CD8-positive, alpha-beta T cell (primary cell): ENCODE measurements at regions of chr19 and their contacts with region 1.

Region 1: DNA sequence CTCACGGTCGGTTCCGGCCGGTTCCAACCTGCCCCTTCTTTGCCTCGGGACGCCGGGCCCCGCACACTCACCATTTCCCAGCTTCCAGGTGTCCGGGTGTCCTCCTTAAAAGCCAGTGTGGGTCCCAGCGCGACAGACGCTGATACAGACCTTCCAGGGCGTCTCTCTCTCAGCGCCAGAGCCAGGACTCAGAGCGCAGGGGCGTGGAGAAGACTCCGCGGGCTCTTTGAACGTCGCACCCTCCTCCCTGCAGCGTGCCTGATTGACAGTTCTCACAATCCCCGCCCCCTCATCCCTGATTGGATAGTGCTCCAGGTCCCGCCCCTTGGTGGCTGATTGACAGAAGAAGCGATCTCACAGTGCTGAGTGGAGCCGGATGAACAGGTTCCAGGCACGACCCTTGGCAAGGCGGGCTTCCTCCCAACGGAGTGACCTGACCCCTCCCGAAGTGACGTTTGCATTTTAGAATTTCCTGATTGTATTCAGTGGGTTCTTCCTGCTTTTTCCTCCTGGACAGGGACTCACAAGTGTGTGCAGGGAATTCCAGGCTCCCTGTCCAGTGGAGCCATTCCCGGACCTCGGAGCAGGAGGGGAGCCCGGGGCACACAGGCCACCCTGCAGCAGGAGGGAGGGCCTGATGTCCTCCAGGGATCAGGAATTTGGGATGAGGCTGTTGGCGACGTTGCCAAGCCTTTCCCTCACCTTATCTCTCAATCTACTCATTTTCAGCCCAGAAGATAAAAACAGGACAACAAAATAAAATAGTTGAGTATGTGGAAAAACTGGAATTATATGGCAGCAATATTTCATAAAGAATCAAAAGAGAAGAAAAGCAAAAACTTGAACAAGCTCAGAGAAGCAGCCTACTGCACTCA is at the start of gene ZNF823:
- DNase-seq: peak; percentile 94 to 99 (median 97)
- ATAC-seq: peak; percentile 99
- H3K4me3 ChIP-seq: peak within 1 kb of the TSS; percentile 72 to 91
- H3K4me3 Mint-ChIP-seq: peak within 1 kb of the TSS; percentile 99
- H3K27ac ChIP-seq: peak within 1 kb of the TSS; percentile 52 to 54
- H3K27ac Mint-ChIP-seq: peak within 1 kb of the TSS; percentile 96
- H3K4me1 ChIP-seq: peaks cover 14% of the 10 kb centered on the region
- H3K4me1 Mint-ChIP-seq: peaks cover 32% of the 10 kb centered on the region
- H3K27me3 ChIP-seq: no peaks in the 10 kb centered on the region
- H3K27me3 Mint-ChIP-seq: no peaks in the 10 kb centered on the region
- CTCF ChIP-seq: no peak
- total RNA-seq, gene ZNF823: 2.8 to 4.3 TPM

Region 2: GRCh38 chr19:11558881-11559828 is 179.8 kb before region 1 on chr19 and contains the start of gene ELOF1:
- CTCF ChIA-PET with region 1: no interaction called
- POLR2A ChIA-PET with region 1: no interaction called
- intact Hi-C with region 1: loop called in 1 of 2 experiments (anchors 5 kb)
- DNase-seq: peak; percentile 90 to 99 (median 97)
- ATAC-seq: peak; percentile 94
- H3K4me3 ChIP-seq: peak within 1 kb of the TSS; percentile 83 to 87
- H3K4me3 Mint-ChIP-seq: peak within 1 kb of the TSS; percentile 93
- H3K27ac ChIP-seq: peak within 1 kb of the TSS; percentile 74 to 78
- H3K27ac Mint-ChIP-seq: peak within 1 kb of the TSS; percentile 93
- H3K4me1 ChIP-seq: peaks cover 29% of the 10 kb centered on the region
- H3K4me1 Mint-ChIP-seq: peaks cover 39% of the 10 kb centered on the region
- H3K27me3 ChIP-seq: no peaks in the 10 kb centered on the region
- H3K27me3 Mint-ChIP-seq: no peaks in the 10 kb centered on the region
- CTCF ChIP-seq: no peak
- total RNA-seq, gene ELOF1: 40.3 to 41.0 TPM

Region 3: DNA sequence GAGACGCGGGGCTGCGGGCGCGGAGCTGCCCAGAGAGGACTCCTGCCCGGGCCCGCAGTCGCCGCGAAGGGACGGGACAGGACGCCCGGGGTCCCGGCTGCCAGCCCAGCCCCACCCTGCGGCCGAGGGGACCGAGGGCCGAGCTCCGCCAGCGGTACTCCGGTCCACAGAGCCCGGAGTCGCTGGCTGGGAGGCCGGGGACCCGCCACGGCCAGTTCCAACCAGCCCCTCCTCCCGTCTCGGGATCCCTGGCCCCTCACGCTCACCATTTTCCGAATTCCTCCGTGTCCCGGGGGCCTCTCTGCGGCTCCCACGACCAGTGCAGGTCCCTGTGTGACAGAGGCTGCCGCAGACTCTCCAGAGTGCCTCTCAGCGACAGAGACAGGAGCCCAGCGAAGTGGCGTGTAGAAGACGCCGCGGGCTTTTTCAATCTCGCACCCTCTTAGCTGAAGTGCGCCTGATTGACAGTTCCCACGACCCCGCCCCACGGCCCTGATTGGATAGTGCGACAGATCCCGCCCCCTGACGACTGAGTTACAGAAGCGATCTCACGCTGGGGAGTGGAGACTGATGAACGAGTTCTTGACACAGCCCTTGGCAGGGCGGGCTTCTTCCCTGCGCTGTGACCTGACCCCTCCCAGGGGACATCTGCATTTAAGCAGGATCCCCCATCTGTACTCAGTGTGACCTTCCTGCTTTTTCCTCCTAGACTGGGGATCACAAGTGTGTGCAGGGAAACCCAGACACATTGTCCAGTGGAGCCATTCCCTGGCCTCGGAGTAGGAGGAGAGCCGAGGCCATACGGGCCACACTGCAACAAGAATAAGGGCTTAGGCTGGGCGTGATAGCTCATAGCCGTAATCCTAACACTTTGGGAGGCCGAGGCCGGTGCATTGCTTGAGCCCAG is 44.2 kb before region 1 on chr19:
- CTCF ChIA-PET with region 1: interaction called, 7 read pairs
- POLR2A ChIA-PET with region 1: no interaction called
- intact Hi-C with region 1: loop called in 1 of 2 experiments (anchors 2 kb)
- DNase-seq: peak; percentile 59 to 84 (median 74)
- ATAC-seq: peak; percentile 99
- H3K4me3 ChIP-seq: peak overlapping the region; percentile 55 to 71
- H3K4me3 Mint-ChIP-seq: peak overlapping the region; percentile 94
- H3K27ac ChIP-seq: no peak overlapping the region
- H3K27ac Mint-ChIP-seq: no peak overlapping the region
- H3K4me1 ChIP-seq: peaks cover 17% of the 10 kb centered on the region
- H3K4me1 Mint-ChIP-seq: peaks cover 13% of the 10 kb centered on the region
- H3K27me3 ChIP-seq: peaks cover 9 to 12% of the 10 kb centered on the region in 2 experiments
- H3K27me3 Mint-ChIP-seq: peaks cover 37% of the 10 kb centered on the region
- CTCF ChIP-seq: no peak

Region 4: GRCh38 chr19:11766597-11767591 is 27.9 kb after region 1 on chr19 and contains the start of gene ZNF441:
- CTCF ChIA-PET with region 1: no interaction called
- POLR2A ChIA-PET with region 1: interaction called, 8 read pairs
- intact Hi-C with region 1: loop called (anchors 1 to 2 kb)
- DNase-seq: peak; percentile 83 to 96 (median 90)
- ATAC-seq: peak; percentile 95
- H3K4me3 ChIP-seq: peak within 1 kb of the TSS; percentile 76 to 78
- H3K4me3 Mint-ChIP-seq: peak within 1 kb of the TSS; percentile 96
- H3K27ac ChIP-seq: peak within 1 kb of the TSS; percentile 79 to 88
- H3K27ac Mint-ChIP-seq: peak within 1 kb of the TSS; percentile 93
- H3K4me1 ChIP-seq: peaks cover 16% of the 10 kb centered on the region
- H3K4me1 Mint-ChIP-seq: peaks cover 26% of the 10 kb centered on the region
- H3K27me3 ChIP-seq: no peaks in the 10 kb centered on the region
- H3K27me3 Mint-ChIP-seq: peaks cover 7% of the 10 kb centered on the region
- CTCF ChIP-seq: no peak
- total RNA-seq, gene ZNF441: 1.9 to 2.3 TPM

Region 5: GRCh38 chr19:11987405-11988281 is 248.7 kb after region 1 on chr19:
- CTCF ChIA-PET with region 1: no interaction called
- POLR2A ChIA-PET with region 1: no interaction called
- intact Hi-C with region 1: loop called in 1 of 2 experiments (anchors 1 kb)
- DNase-seq: peak; percentile 82 to 94 (median 91)
- ATAC-seq: peak; percentile 92
- H3K4me3 ChIP-seq: peak overlapping the region; percentile 89 to 98
- H3K4me3 Mint-ChIP-seq: peak overlapping the region; percentile 99
- H3K27ac ChIP-seq: peak overlapping the region; percentile 79 to 83
- H3K27ac Mint-ChIP-seq: peak overlapping the region; percentile 91
- H3K4me1 ChIP-seq: peaks cover 10% of the 10 kb centered on the region
- H3K4me1 Mint-ChIP-seq: peaks cover 26% of the 10 kb centered on the region
- H3K27me3 ChIP-seq: no peaks in the 10 kb centered on the region
- H3K27me3 Mint-ChIP-seq: no peaks in the 10 kb centered on the region
- CTCF ChIP-seq: no peak